Activated CD4-positive, alpha-beta T cell treated with anti-CD3 and anti-CD28 coated beads for 36 hours (primary cell): ENCODE measurements at regions of chr5 and their contacts with region 1.

Region 1: DNA sequence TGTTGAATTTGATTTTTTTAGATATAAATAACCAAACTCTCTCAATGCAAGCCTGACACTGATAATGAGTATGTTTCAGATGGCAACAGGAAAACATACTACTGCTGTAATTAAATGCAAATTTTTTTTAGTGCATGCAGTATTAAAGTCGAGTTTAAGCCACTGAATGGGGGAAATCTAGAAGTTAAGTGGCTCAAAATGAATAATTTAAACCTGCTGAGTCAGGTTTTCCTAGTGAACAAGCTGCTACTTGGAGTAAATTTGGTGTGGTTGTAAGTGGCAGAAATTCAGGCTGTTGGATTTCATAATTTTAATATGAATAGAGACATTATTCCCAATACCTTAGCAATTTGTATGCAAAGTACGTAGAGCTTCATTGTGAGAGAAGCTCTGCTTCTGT is 121.8 kb downstream of the SLF1 start:
- DNase-seq: no peak
- ATAC-seq: no peak
- H3K4me3 Mint-ChIP-seq: no peak overlapping the region
- H3K27ac Mint-ChIP-seq: no peak overlapping the region
- H3K4me1 Mint-ChIP-seq: peaks cover under 1% of the 10 kb centered on the region
- H3K27me3 Mint-ChIP-seq: no peaks in the 10 kb centered on the region

Region 2: DNA sequence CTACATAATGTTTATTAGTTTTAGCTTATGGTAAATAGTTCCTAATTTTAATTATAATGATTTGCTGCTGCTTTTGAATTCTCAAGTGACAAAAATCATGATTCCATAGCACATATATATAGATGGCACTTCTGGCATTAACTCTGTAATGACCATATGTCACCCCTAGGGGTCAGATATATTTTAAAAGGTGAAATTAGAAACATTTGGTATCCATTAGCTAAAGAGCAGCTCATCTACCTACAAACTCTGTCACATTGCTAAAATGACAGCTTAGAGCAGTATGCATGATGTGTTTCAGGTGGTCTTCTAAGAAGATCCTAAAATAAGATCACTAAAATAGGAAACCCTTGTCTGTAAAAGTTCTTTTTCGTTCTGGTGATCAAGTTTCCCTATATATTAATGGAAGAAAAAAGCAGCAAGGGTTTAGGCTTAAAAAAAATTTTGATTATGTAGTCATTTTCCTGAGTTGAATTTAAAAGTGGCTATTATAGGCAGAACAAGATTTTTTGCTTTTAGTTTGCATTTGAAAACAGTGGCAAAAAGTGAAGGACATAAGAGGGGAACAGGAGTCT is 841.2 kb before region 1 on chr5:
- CTCF ChIA-PET with region 1: no interaction called
- POLR2A ChIA-PET with region 1: no interaction called
- intact Hi-C with region 1: loop called in 1 of 2 experiments (anchors 5 kb)
- DNase-seq: no peak
- ATAC-seq: no peak
- H3K4me3 Mint-ChIP-seq: no peak overlapping the region
- H3K27ac Mint-ChIP-seq: no peak overlapping the region
- H3K4me1 Mint-ChIP-seq: peaks cover 2% of the 10 kb centered on the region
- H3K27me3 Mint-ChIP-seq: no peaks in the 10 kb centered on the region

Region 3: DNA sequence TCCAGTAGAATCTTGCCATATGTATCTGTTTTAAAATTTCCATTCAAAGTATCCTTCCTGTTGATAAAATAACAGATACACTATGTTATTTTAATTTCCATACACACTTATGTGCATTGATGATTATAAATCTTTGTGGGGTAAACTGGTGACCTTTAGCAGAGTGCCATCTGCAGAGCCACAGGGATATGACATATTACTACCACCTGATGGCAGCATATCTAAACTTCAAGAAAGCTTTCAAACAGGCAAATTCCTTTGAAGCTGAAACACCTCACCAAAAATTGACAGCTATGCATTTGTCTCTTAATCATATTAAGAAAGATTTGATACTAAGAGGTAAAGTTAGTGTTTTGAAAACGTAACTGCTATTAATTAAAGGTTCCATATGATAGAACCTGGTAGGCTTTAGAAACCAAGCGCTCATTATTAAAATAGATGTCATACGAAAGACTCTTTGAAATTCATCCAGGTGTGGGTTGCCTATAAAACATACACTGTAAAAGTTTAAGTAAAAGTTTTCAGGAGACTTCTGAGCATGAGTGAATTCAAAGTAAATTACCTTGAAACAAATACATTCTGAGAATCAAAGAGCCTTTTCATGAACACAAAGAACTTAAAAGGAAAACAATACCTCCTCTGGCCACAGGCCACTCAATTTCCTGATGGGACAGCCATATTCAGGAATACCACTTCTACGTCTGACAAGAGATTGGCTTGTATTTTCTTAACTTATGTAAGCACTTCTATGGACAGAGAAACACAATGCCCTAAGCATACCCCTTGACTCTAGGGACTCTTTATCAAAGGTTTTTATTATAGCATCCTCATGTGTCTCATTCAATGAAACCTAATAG is 215.2 kb before region 1 on chr5:
- CTCF ChIA-PET with region 1: interaction called, 37 read pairs
- POLR2A ChIA-PET with region 1: no interaction called
- intact Hi-C with region 1: loop called (anchors 1 kb)
- DNase-seq: peak; percentile 20
- ATAC-seq: peak; percentile 74
- H3K4me3 Mint-ChIP-seq: no peak overlapping the region
- H3K27ac Mint-ChIP-seq: no peak overlapping the region
- H3K4me1 Mint-ChIP-seq: no peaks in the 10 kb centered on the region
- H3K27me3 Mint-ChIP-seq: no peaks in the 10 kb centered on the region

Region 4: DNA sequence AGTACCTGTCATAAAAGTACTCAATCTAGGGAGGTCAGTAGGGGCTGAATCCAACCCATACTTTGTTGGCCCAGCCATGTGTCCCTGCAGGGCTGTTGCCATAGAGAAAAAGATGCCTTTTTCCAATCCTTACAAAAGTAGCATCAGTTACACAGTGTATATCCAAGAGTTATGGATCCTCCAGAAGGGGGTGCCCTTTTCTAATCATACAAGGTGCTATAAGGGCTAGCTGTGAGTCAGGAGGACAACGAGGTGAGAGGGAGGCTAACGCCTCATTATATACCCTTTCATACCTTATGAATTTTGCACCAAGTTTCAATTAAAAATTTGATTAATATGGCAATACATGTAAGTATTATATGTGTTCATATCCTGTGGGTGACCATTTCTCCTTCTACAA is 126.7 kb before region 1 on chr5:
- CTCF ChIA-PET with region 1: interaction called, 5 read pairs
- POLR2A ChIA-PET with region 1: no interaction called
- intact Hi-C with region 1: loop called (anchors 2 kb)
- DNase-seq: no peak
- ATAC-seq: peak; percentile 20
- H3K4me3 Mint-ChIP-seq: no peak overlapping the region
- H3K27ac Mint-ChIP-seq: no peak overlapping the region
- H3K4me1 Mint-ChIP-seq: peaks cover 14% of the 10 kb centered on the region
- H3K27me3 Mint-ChIP-seq: no peaks in the 10 kb centered on the region

Region 5: DNA sequence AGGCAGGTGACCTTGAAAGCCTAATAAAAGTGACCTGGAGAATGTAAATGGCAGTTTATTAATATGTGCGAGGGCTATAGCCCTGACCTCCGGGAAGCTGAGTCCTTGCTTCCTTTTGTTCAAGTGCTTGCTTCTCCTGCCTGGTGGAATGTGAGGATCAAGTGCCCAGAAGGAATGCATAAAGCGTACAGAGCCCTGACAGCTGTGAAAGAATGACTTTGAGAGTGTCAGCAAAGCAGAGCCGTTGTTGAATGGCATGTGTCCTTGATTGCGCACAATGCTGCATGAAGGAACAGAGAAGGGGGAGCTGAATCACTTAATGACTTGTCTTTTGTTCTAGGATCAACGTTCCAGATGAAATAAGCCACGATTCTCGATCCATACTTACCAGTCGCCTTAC is 11.2 kb after region 1 on chr5:
- CTCF ChIA-PET with region 1: interaction called, 18 read pairs
- POLR2A ChIA-PET with region 1: no interaction called
- intact Hi-C with region 1: no loop called
- DNase-seq: no peak
- ATAC-seq: no peak
- H3K4me3 Mint-ChIP-seq: no peak overlapping the region
- H3K27ac Mint-ChIP-seq: no peak overlapping the region
- H3K4me1 Mint-ChIP-seq: peaks cover 3% of the 10 kb centered on the region
- H3K27me3 Mint-ChIP-seq: no peaks in the 10 kb centered on the region